ENCODE measurements at regions of chr17 and their contacts with region 1.

Region 1: GRCh38 chr17:38333635-38334295 is 10.0 kb downstream of the GPR179 start:
- DNase-seq: peak; percentile 89
- H3K4me3 Mint-ChIP-seq: no peak overlapping the region
- H3K27ac Mint-ChIP-seq: no peak overlapping the region
- H3K4me1 Mint-ChIP-seq: no peaks in the 10 kb centered on the region
- H3K27me3 Mint-ChIP-seq: peaks cover 92% of the 10 kb centered on the region
- CTCF ChIP-seq: peak; percentile 99

Region 2: GRCh38 chr17:38322091-38322779 is 11.5 kb before region 1 on chr17:
- CTCF ChIA-PET with region 1: interaction called, 14 read pairs
- intact Hi-C with region 1: no loop called
- DNase-seq: peak; percentile 96
- H3K4me3 Mint-ChIP-seq: no peak overlapping the region
- H3K27ac Mint-ChIP-seq: no peak overlapping the region
- H3K4me1 Mint-ChIP-seq: peaks cover 19% of the 10 kb centered on the region
- H3K27me3 Mint-ChIP-seq: no peaks in the 10 kb centered on the region
- CTCF ChIP-seq: peak; percentile 100

Measured in Calu3 (cell line).